ENCODE measurements at regions of chr14 and their contacts with region 1.

Region 1: GRCh38 chr14:80575763-80576162 is 364.5 kb upstream of the DIO2 start:
- DNase-seq: no peak
- H3K4me3 ChIP-seq: no peak overlapping the region
- H3K27ac ChIP-seq: no peak overlapping the region
- H3K4me1 ChIP-seq: no peaks in the 10 kb centered on the region
- H3K27me3 ChIP-seq: no peaks in the 10 kb centered on the region
- CTCF ChIP-seq: no peak
- POLR2A ChIP-seq: no peak

Region 2: DNA sequence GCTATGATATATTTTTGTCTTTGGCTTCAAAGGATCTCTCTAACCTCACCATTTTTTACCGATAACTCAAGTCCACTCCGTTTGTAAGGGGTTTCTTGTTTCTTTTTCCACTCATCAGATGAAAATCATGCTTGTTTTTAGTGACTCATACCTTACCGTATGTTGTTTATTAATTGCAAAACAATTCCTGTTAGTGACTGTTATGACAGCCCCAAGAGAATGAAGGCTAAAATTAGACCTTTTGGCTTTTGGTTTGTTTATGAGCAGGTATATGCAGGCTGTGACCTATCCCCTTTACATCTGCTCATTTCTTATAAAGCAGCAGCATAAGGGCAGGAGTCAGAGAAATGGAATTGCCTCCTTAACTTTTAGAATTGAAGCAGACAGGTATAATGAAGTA is 45.9 kb after region 1 on chr14:
- CTCF ChIA-PET with region 1: no interaction called
- POLR2A ChIA-PET with region 1: no interaction called
- dilution Hi-C with region 1: no loop called
- intact Hi-C with region 1: loop called (anchors 1 kb)
- DNase-seq: peak; percentile 71
- H3K4me3 ChIP-seq: no peak overlapping the region
- H3K27ac ChIP-seq: no peak overlapping the region
- H3K4me1 ChIP-seq: peaks cover 6% of the 10 kb centered on the region
- H3K27me3 ChIP-seq: no peaks in the 10 kb centered on the region
- CTCF ChIP-seq: no peak
- POLR2A ChIP-seq: no peak